ENCODE measurements at regions of chr3 and their contacts with region 1.

Region 1: DNA sequence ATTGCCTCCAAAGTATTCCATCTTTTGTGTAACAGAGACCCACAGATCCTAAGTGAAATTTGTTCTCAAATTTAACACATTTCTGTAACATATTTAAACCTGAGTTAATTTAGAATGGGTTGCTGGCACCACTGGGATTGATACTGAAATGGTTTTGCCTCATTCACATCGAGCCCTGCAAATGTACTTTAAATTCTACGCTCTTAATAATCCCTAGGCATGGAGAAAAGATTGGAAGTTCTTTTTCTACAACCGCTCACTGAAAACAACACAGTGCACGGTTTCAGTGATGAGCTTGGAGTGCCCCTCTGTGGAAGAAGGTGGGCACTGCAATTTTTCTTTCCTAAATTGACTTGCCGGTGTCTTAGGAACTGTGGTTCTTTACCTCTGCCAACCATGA is 109.9 kb upstream of the ATP11B start:
- DNase-seq: peak; percentile 72
- ATAC-seq: peak; percentile 77
- H3K4me3 Mint-ChIP-seq: peak overlapping the region; percentile 52
- H3K27ac Mint-ChIP-seq: no peak overlapping the region
- H3K4me1 Mint-ChIP-seq: peaks cover 9% of the 10 kb centered on the region
- H3K27me3 Mint-ChIP-seq: peaks cover 39% of the 10 kb centered on the region

Region 2: DNA sequence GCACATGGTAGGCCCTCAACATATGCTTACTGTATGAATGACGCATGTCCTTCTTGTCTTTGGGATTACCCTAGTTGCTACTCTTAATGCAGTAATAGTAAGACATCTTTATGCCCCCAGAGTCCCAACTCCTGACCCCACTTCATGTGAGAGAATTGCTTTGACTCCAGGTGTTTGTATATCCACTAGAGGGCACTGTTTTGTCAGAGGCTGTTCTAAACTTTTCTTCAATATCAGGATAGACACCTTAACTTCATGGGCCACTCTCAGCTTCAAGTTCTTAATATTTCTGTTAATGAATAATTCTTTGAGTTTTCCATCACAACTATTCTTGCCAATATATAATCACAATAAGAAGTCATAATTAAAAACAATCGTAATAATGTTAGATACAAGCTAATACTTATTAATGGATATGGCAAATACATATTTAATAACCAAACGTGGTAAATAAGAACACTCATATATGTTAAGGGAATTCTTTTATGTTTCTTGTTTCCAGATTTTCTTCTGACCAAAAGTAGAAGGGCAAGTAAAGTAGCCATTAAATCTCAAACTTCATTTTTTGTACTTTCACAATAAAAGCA is 1356.7 kb before region 1 on chr3:
- CTCF ChIA-PET with region 1: interaction called, 7 read pairs
- POLR2A ChIA-PET with region 1: no interaction called
- intact Hi-C with region 1: loop called (anchors 1 to 2 kb)
- DNase-seq: no peak
- ATAC-seq: no peak
- H3K4me3 Mint-ChIP-seq: no peak overlapping the region
- H3K27ac Mint-ChIP-seq: no peak overlapping the region
- H3K4me1 Mint-ChIP-seq: no peaks in the 10 kb centered on the region
- H3K27me3 Mint-ChIP-seq: peaks cover 3% of the 10 kb centered on the region

Region 3: DNA sequence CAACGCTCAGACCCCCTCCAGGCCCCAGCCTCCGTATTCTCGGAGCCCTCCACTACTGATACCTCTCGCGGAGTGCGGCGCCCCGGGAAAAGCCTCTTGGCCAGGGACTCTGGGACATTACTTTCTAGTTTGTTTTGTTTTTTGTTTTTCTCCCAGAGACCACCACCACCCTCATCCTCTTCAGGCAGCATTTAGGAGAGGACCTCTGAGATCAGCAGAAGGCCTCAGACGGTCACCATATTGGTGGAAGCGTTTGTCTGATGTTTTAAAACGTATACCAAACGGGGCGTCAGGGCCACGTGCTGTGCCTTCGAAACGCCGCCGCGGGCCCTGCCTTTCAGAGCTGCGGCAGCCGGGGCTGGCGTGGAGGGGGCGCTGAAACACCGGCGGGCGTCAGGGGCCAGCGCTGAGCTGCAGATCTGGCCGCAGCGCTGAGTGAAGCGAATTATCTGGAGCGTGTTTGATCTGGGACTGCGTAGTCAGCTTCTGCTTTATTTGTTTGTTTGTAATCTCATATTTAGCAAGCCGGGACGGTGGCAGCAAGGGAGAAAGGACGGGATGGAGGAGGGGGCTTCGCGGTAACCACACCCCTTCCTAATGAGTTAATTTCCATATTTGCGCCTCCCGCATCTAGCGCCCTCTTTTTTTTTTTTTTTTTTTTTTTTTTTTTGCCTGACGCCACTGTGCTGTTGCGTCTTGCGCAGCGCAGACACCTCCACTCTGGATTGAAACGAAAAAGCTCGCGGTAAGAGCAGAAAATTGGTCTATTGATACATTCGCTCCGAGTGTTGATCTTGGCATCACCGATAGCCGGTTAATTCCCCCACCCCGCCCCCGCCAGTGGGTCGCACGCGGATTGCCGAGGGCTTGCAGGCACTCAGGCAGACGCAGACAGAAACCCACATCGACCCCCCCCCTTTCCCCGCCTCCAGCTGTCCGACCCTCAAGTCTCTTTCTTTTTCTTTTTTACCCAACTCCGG is 956.8 kb before region 1 on chr3:
- CTCF ChIA-PET with region 1: interaction called, 4 read pairs
- POLR2A ChIA-PET with region 1: no interaction called
- intact Hi-C with region 1: loop called in 1 of 2 experiments (anchors 5 kb)
- DNase-seq: no peak
- ATAC-seq: no peak
- H3K4me3 Mint-ChIP-seq: peak overlapping the region; percentile 35
- H3K27ac Mint-ChIP-seq: no peak overlapping the region
- H3K4me1 Mint-ChIP-seq: peaks cover 12% of the 10 kb centered on the region
- H3K27me3 Mint-ChIP-seq: peaks cover 88% of the 10 kb centered on the region

Region 4: DNA sequence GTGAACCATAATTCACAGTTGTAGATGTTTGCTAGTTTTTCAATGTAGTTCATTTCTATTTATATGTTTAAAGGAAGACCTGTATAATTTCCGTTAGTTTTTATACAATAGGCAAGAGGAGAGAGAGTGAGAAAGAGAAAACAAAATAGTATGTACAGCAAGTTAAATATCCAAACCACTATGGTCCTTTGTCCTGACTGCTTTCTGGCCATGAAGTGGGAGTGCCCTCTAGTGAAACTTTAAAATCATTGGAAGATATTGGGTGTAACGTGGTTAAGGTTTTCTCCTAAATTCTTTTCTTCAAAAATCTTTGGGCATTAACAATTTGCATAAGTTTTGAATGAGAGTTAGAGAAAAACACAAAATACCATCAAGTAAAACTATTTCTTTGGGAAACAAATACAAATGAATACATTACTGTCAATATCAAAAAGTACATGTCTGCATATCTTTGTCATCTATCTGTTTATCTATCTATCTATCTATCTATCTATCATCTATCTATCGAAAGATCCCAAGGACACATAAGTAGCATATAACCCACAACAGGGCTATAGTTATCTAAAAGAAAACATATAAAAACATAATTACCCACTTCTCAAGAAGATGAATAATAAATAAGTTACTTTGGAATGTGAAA is 424.8 kb before region 1 on chr3:
- CTCF ChIA-PET with region 1: no interaction called
- POLR2A ChIA-PET with region 1: no interaction called
- intact Hi-C with region 1: loop called in 1 of 2 experiments (anchors 10 kb)
- DNase-seq: no peak
- ATAC-seq: no peak
- H3K4me3 Mint-ChIP-seq: no peak overlapping the region
- H3K27ac Mint-ChIP-seq: no peak overlapping the region
- H3K4me1 Mint-ChIP-seq: no peaks in the 10 kb centered on the region
- H3K27me3 Mint-ChIP-seq: peaks cover 8% of the 10 kb centered on the region

Region 5: DNA sequence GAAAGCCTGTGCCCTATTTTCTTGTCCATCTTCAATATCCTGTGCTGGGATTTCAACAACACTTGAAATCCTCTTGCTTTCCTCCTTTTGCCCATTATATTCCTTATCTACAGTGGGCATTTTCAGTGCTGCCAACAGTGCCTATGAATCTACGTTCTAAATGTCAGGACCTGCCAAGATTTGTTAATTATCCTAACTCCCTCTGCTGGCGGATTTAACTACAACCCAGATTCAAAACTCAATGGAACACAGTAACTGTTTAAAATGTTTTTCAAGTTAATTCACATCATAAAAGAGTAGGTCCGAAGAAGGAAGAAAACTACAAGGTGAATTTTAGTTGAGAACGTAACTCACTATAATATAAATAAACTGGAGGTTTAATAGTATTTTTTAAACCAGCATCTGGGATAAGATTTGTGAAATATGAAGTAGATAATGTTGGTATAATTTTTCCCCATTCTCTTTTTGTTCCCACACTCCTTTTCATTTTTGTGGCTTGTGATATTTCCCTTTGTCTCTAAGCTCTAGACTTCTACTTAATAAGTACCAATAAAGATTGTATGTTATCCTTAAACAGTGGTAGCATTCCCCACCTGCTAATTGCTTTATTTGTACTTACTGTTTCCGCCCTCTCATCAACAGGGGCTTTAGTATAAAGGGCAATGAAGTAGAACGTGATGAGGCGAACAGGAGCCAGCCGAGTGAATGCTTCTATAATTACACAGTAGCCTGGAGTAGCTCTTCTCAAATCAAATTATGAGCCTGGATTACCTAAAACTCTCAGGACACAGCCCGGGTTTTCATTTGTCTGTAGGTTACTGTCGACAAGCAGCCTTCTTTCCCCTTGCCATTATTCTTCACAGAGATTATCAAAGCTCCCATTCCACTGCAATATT is 192.6 kb before region 1 on chr3:
- CTCF ChIA-PET with region 1: interaction called, 5 read pairs
- POLR2A ChIA-PET with region 1: no interaction called
- intact Hi-C with region 1: loop called (anchors 5 to 10 kb)
- DNase-seq: peak; percentile 9
- ATAC-seq: no peak
- H3K4me3 Mint-ChIP-seq: no peak overlapping the region
- H3K27ac Mint-ChIP-seq: no peak overlapping the region
- H3K4me1 Mint-ChIP-seq: no peaks in the 10 kb centered on the region
- H3K27me3 Mint-ChIP-seq: no peaks in the 10 kb centered on the region

Region 6: DNA sequence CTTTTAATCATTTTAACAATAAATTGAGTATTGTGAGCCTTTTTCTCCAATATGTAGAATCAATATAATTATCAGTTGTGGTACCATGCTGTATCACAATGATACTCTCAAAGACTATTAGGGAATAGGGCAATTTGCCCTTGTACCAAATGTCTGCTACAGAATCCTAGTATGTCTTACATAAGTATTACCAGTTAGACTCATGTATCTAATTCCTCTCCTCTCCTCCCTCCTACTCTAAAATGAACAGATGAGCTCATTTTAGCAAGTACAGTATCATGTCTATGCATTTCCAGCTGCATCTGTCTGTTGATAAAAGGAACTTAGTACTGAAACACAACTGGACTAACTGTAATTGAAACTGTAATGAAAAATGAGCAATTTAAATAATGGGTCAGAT is 14.5 kb before region 1 on chr3:
- CTCF ChIA-PET with region 1: no interaction called
- POLR2A ChIA-PET with region 1: no interaction called
- intact Hi-C with region 1: no loop called
- DNase-seq: no peak
- ATAC-seq: no peak
- H3K4me3 Mint-ChIP-seq: no peak overlapping the region
- H3K27ac Mint-ChIP-seq: no peak overlapping the region
- H3K4me1 Mint-ChIP-seq: no peaks in the 10 kb centered on the region
- H3K27me3 Mint-ChIP-seq: peaks cover 19% of the 10 kb centered on the region

Measured in activated CD4-positive, alpha-beta T cell treated with anti-CD3 and anti-CD28 coated beads for 36 hours (primary cell).